ENCODE measurements at regions of chr2 and their contacts with region 1.

Region 1: DNA sequence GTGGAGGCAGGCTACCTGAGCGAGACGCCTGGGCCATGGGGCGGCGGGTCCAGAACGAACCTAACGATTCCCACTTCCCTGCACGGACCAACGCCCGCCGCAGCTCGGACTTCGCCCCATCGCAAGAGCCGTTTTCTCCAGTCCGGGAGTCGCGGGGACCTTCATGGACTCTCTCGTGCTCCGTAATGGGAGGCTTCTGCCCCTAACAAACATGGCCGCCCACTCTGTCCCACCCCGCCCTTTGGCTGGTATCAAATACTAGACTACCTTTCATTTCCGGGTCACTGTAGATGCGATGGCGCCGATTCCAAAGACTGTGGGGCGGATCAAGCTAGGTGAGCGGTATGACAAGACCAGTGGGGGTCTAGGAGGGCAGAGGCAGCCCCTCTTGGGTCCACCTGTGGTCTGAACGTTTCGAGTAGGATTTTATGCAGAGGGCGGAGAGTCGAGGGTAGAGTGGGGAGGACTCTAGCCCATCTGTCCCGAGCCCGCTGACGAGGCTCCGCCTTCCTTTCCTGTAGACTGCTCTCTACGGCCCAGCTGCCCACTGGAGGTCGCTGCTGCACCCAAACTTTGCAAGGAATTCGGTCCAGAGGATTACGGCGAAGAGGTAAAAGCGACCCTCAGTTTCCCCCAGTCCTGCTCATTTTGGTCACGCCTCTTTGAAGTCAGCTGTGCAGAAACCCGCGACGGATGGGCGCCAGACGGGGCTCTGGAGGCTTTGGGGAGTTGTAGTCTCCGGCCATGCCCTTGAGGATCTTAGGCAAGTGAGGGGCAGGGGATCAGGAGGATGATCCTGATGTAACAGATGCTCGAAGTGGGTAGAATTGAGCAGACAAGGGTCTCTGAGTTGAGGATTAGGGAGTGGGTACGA is at the starts of genes CCDC142 and TTC31:
- DNase-seq: peak; percentile 97
- ATAC-seq: peak; percentile 95
- H3K4me3 Mint-ChIP-seq: peak within 1 kb of the TSS; percentile 97
- H3K27ac Mint-ChIP-seq: peak within 1 kb of the TSS; percentile 100
- H3K4me1 Mint-ChIP-seq: peaks cover 44% of the 10 kb centered on the region
- H3K27me3 Mint-ChIP-seq: no peaks in the 10 kb centered on the region
- total RNA-seq, gene CCDC142: 26.5 to 29.5 TPM
- total RNA-seq, gene TTC31: 39.4 to 48.8 TPM

Region 2: GRCh38 chr2:74238879-74239278 is 244.2 kb before region 1 on chr2:
- CTCF ChIA-PET with region 1: no interaction called
- DNase-seq: no peak
- ATAC-seq: no peak
- H3K4me3 Mint-ChIP-seq: no peak overlapping the region
- H3K27ac Mint-ChIP-seq: no peak overlapping the region
- H3K4me1 Mint-ChIP-seq: peaks cover 2% of the 10 kb centered on the region
- H3K27me3 Mint-ChIP-seq: no peaks in the 10 kb centered on the region

Region 3: GRCh38 chr2:74458132-74458925 is 24.7 kb before region 1 on chr2 and contains the start of gene WBP1:
- CTCF ChIA-PET with region 1: interaction called, 66 read pairs
- DNase-seq: peak; percentile 100
- ATAC-seq: peak; percentile 86
- H3K4me3 Mint-ChIP-seq: peak within 1 kb of the TSS; percentile 94
- H3K27ac Mint-ChIP-seq: peak within 1 kb of the TSS; percentile 95
- H3K4me1 Mint-ChIP-seq: peaks cover 51% of the 10 kb centered on the region
- H3K27me3 Mint-ChIP-seq: no peaks in the 10 kb centered on the region
- total RNA-seq, gene WBP1: 40.5 to 46.8 TPM

Region 4: DNA sequence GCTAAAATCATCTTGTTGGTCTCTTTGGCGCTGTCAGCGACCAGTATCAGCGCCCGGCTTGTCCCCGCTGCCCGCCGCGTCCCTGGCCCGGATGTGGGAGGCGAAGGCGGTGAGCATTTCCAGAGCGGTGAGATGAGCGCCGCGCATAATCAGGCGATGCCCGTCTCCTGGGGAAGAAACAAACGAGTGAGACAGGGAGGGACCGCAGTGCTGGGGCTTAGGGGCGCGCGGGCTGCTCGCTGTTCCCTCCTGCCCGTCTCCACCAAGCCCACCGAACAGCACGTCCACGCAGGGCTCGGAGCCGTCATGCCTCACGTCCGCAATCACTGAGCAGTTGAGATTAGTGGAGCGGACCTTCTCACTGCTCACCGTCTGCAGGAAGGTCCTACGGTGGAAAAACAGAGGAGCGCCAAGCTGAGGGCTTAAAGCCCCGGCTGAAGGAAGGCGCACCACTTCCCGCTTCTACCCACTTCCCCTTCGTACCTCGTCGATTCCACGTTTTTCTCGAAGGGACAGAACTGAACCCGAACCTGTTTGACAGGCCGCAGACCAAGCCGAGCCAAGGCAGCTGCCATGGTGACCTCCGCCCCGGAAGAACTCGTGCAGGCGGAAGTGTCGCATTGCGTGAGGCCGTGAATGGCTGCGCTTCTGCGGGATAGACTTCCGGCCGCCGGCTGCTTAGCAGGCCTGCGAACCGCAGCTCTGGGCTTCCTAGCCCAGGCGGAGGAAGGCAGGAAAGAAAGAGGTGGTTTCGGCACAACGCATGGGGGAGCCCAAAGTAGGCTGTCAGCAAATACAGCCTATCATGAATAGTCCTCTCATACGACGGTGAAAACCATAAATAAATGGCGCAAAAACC is 10.7 kb before region 1 on chr2 and contains the start of gene MRPL53:
- CTCF ChIA-PET with region 1: interaction called, 36 read pairs
- DNase-seq: peak; percentile 97
- ATAC-seq: peak; percentile 93
- H3K4me3 Mint-ChIP-seq: peak within 1 kb of the TSS; percentile 94
- H3K27ac Mint-ChIP-seq: peak within 1 kb of the TSS; percentile 95
- H3K4me1 Mint-ChIP-seq: peaks cover 31% of the 10 kb centered on the region
- H3K27me3 Mint-ChIP-seq: no peaks in the 10 kb centered on the region
- total RNA-seq, gene MRPL53: 93.9 to 111 TPM

Region 5: DNA sequence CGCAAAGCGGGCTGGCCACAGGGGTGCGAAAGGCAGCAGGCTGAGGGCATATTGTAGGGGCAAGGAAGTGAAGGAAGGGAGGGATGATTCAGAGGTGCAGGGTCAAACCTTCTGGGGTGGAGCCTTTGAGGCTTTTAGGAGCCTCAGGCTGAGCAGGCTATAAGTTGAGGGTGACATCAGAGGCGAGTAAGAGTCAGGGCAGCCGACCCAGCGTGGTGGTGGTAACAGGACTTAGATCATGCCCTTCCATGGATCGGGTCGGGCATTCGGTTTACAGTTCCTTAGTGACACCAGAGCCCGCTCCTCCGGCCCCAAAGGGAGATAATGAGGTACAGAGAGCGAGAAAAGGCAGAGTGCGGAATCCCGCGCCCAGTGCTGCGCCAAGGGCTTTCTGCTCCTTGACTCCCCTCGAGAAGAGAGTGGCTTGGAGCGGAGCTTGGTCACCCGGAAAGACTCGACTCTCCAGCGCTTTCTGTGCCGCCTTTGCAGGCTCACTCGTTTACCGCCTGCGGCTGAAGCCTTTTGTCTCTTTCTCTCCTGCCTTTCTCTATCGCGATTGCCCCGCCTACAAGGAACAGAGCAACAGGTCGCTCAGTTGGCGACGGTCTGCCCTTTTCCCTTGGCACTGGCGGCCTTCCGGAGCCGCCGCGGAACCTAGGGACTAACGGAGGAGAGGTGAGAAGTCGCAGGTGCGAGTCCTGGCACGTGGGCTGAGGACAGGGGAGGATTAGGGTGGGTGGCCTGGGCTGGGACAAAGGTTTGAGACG is 15.6 kb after region 1 on chr2:
- CTCF ChIA-PET with region 1: interaction called, 25 read pairs
- DNase-seq: peak; percentile 69
- ATAC-seq: peak; percentile 63
- H3K4me3 Mint-ChIP-seq: peak overlapping the region; percentile 84
- H3K27ac Mint-ChIP-seq: peak overlapping the region; percentile 80
- H3K4me1 Mint-ChIP-seq: peaks cover 33% of the 10 kb centered on the region
- H3K27me3 Mint-ChIP-seq: peaks cover 49% of the 10 kb centered on the region

Region 6: DNA sequence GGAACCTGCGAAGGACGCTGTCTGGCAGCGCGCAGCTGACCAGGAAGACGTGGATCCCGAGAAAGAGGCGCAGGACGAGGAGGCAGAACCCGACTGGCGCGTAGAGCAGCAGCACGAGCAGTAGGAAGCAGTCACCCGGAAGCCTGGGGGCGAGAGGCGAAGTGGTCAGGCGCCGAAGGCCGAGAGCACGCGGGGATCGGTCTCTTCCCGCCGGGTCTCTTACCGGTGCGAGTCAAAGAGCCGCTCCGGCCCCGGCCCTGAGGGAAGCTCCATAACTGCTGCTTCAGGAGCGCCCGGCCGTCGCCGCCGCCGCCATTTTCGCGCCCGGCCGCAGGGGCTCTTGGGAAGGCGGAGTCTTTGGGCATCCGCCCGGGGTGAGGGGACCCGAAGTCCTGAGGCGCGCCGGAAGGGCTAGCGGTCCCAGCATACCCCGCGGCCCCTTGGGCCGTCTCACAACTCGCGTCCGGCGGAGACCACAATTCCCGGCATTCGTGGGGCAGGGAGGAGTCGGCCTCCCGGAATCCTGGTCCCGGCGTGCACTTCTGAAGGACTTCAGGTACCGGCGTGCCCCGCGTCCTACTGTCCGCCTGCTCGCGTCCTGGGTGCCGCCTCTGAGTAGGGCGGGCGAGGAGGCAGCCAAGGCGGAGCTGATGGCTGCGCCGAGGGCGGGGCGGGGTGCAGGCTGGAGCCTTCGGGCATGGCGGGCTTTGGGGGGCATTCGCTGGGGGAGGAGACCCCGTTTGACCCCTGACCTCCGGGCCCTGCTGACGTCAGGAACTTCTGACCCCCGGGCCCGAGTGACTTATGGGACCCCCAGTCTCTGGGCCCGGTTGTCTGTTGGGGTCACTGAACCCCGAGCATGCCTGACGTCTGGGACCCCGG is 46.6 kb after region 1 on chr2 and contains the starts of genes AUP1 and HTRA2:
- CTCF ChIA-PET with region 1: interaction called, 61 read pairs
- DNase-seq: peak; percentile 98
- ATAC-seq: peak; percentile 90
- H3K4me3 Mint-ChIP-seq: peak within 1 kb of the TSS; percentile 100
- H3K27ac Mint-ChIP-seq: peak within 1 kb of the TSS; percentile 97
- H3K4me1 Mint-ChIP-seq: peaks cover 46% of the 10 kb centered on the region
- H3K27me3 Mint-ChIP-seq: no peaks in the 10 kb centered on the region
- total RNA-seq, gene AUP1: 140 to 158 TPM
- total RNA-seq, gene HTRA2: 52.2 to 87.2 TPM

Region 7: DNA sequence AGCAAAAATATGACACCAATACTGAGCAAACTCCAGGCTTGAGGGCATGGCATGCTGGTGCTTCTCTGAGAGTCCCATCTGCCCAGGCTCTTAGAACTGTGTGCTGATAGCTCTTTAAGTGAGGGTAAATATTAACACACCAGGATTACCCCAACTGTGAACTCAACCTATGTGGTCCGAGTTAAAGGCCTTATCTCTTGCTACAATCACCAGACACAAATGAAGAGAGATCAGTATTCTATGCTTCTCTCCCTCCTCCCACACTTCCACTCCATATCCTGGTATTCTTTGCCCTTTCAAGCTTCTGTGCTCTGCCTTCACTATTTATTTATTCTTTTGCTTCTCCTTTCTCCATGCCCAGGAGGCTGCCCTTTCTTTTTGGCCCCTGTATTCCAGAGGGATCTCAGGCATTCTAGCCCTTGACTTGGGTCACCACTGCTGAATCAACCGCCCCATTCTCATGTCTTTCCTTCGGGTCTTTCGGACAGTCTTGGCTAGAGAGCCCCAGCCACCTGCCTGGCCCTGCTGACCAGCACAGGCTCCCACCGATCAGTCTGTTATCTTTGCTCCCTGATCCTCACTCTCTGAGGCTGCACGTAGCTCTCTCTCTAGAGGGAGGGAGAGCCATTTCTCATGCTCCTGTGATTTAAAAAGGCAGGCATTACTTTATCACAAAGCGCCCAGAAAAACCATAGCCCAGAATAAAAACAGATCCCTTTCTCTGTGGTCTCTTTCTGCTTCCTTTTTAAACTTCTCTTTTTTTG is 333.7 kb after region 1 on chr2:
- CTCF ChIA-PET with region 1: no interaction called
- DNase-seq: no peak
- ATAC-seq: no peak
- H3K4me3 Mint-ChIP-seq: no peak overlapping the region
- H3K27ac Mint-ChIP-seq: no peak overlapping the region
- H3K4me1 Mint-ChIP-seq: peaks cover 6% of the 10 kb centered on the region
- H3K27me3 Mint-ChIP-seq: peaks cover 35% of the 10 kb centered on the region